ENCODE measurements at regions of chr4 and their contacts with region 1.

Region 1: DNA sequence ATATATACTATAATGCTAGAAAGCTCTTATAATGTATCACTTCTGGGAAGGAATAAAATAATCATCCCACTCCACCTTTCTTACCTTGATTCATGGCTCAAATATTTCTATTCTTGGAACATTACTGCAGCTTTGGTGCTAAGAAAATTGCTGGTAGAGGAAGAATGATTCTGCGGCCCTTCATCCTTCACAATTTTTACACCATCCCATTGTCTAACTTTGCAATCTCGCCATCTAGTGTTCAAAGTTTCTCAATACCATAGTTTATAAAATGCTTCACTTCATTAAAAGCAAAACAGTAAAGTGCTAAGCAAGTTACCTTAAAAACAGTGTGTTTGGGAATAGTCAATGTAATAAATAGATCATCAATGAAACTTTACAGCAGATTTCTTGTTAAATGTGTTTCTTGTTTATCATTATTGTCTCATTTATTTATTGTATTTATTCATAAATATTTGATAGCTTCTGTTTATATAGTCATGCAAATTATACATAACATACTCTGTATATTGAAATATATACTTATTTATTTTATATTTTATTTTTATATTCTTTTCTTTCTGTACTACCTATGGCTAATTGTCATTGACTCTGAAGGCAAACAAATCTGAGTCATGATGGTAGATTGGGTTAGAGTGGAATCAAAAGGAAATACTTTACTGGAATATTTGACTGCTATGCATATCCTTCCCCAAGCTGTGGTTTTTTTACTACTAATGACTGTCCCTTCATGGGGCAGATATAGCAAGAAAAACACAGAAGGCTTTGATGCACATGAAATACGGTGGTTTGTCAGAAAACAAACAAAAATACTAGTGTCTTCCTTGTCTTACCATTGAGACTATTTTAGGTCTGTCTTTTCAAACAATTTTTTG is 390.7 kb downstream of the MAPK10 start:
- DNase-seq: no peak
- H3K4me3 ChIP-seq: no peak overlapping the region
- H3K27ac ChIP-seq: no peak overlapping the region
- H3K4me1 ChIP-seq: peaks cover 28% of the 10 kb centered on the region
- H3K27me3 ChIP-seq: no peaks in the 10 kb centered on the region
- CTCF ChIP-seq: peak; percentile 72

Region 2: DNA sequence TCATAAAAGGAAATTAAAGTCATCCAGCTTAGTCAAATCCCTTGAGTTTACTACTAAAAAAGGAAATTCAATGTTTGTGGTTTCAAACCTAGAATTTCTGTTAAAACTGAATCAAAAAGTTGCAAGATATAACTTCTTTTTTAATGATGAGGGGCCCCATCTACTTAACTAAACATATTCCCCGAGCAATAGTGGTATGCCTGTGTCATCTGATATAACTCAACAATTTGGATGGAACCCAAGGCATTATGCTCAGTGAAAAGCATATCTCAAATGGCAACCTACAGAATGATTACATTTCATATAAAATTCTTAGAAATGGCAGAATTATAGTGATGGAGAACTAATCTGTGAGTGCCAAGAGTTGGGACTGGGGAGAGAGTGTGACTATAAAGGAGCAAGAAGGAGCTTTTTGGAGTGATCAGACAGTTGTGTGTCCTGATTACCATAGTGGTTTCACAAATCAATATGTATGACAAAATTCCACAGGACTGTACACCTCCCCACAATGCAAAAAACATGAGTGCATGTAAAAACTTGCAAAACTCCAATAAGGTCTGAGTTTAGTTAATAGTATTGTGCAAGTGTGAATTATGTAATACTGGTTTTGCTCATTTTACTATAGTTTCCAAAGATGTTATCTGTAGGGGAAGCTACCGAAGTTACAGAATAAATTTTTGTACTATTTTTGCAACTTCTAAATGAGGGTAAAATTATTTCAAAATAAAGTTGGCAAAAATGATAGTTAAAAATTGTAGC is 171.0 kb before region 1 on chr4:
- intact Hi-C with region 1: loop called (anchors 5 kb)
- DNase-seq: no peak
- H3K4me3 ChIP-seq: no peak overlapping the region
- H3K27ac ChIP-seq: no peak overlapping the region
- H3K4me1 ChIP-seq: peaks cover 20% of the 10 kb centered on the region
- H3K27me3 ChIP-seq: no peaks in the 10 kb centered on the region
- CTCF ChIP-seq: no peak